ENCODE measurements at regions of chr7 and their contacts with region 1.

Region 1: GRCh38 chr7:94907026-94907810 is at the start of gene PPP1R9A:
- DNase-seq: peak; percentile 63
- ATAC-seq: peak; percentile 87
- H3K4me3 ChIP-seq: peak within 1 kb of the TSS; percentile 66 to 88 (median 81)
- H3K27ac ChIP-seq: peak within 1 kb of the TSS; percentile 81
- H3K4me1 ChIP-seq: peaks cover 48% of the 10 kb centered on the region
- H3K27me3 ChIP-seq: no peaks in the 10 kb centered on the region; a peak in 1 of 5 replicates
- CTCF ChIP-seq: peak; percentile 70
- EP300 ChIP-seq: peak in 1 of 2 experiments; percentile 45; a peak in 1 of 4 replicates
- POLR2A ChIP-seq: 0 out of 4 replicates have a peak, but pooled peaks of 1 of the 2 experiments have one; percentile 45
- RAD21 ChIP-seq: peak; percentile 75
- total RNA-seq, gene PPP1R9A: 18.2 and 31.9 TPM in 2 replicates

Region 2: DNA sequence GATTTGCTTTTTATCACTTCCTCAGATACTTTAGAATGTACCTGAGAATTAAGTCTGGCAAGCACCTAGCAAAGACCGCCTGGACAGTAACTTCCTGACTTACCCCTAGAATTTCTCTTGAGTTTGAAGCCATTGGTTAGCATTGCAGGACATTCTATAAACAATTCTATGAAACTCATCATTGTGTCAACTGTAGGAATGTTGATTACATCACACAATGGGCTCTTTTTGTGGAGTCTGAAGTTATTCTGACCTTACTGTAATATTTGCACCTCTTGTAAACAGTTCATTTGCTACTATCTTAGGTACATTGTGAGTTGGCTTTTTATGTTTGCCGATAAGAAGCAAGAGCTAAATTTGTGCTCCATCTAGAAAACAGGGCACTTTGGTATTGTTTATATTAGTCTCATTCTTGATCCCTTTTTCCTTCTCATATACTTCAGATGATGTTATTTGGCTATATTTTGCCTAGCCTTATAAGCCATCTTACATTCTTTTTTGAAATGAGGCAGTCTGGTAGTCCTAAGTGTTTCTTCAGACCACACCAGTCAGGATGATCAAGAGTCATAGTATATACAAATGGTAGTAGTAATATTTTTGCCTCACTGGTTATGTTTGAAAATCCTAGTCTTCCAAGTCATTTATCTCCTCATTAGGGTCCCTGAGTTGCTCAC is 345.2 kb before region 1 on chr7:
- CTCF ChIA-PET with region 1: no interaction called
- POLR2A ChIA-PET with region 1: no interaction called
- in situ Hi-C with region 1: no loop called
- intact Hi-C with region 1: loop called (anchors 10 kb)
- DNase-seq: peak; percentile 97
- ATAC-seq: peak; percentile 95
- H3K4me3 ChIP-seq: no peak overlapping the region
- H3K27ac ChIP-seq: peak overlapping the region; percentile 73
- H3K4me1 ChIP-seq: peaks cover 41% of the 10 kb centered on the region
- H3K27me3 ChIP-seq: no peaks in the 10 kb centered on the region
- CTCF ChIP-seq: no peak
- EP300 ChIP-seq: peak; percentile 45 to 97; a peak in 2 of 4 replicates
- POLR2A ChIP-seq: no peak
- RAD21 ChIP-seq: no peak

Region 3: GRCh38 chr7:94972296-94972695 is 65.1 kb after region 1 on chr7:
- CTCF ChIA-PET with region 1: no interaction called
- POLR2A ChIA-PET with region 1: interaction called, 6 read pairs
- in situ Hi-C with region 1: no loop called
- intact Hi-C with region 1: loop called (anchors 2 kb)
- DNase-seq: peak; percentile 93
- ATAC-seq: peak; percentile 58
- H3K4me3 ChIP-seq: no peak overlapping the region
- H3K27ac ChIP-seq: peak overlapping the region; percentile 46
- H3K4me1 ChIP-seq: peaks cover 72% of the 10 kb centered on the region
- H3K27me3 ChIP-seq: no peaks in the 10 kb centered on the region
- CTCF ChIP-seq: no peak
- EP300 ChIP-seq: peak in 1 of 2 experiments; percentile 81; a peak in 2 of 4 replicates
- POLR2A ChIP-seq: no peak
- RAD21 ChIP-seq: no peak

Region 4: GRCh38 chr7:95045236-95045923 is 138.2 kb after region 1 on chr7:
- CTCF ChIA-PET with region 1: no interaction called
- POLR2A ChIA-PET with region 1: no interaction called
- in situ Hi-C with region 1: no loop called
- intact Hi-C with region 1: loop called (anchors 2 kb)
- DNase-seq: peak; percentile 57
- ATAC-seq: peak; percentile 99
- H3K4me3 ChIP-seq: no peak overlapping the region
- H3K27ac ChIP-seq: no peak overlapping the region
- H3K4me1 ChIP-seq: 0 out of 2 replicates have a peak, but pooled peaks cover 11% of the 10 kb centered on the region
- H3K27me3 ChIP-seq: no peaks in the 10 kb centered on the region
- CTCF ChIP-seq: peak; percentile 84
- EP300 ChIP-seq: no peak
- POLR2A ChIP-seq: no peak
- RAD21 ChIP-seq: peak; percentile 85

Measured in HepG2 (cell line).